ENCODE measurements at regions of chr1 and their contacts with region 1.

Region 1: GRCh38 chr1:206106328-206107167 is 10.6 kb downstream of the AVPR1B start:
- DNase-seq: peak; percentile 53 to 75 (median 61)
- H3K4me3 ChIP-seq: no peak overlapping the region
- H3K4me3 Mint-ChIP-seq: no peak overlapping the region
- H3K27ac ChIP-seq: no peak overlapping the region
- H3K27ac Mint-ChIP-seq: no peak overlapping the region
- H3K4me1 ChIP-seq: no peaks in the 10 kb centered on the region
- H3K4me1 Mint-ChIP-seq: peaks cover 0 to 1% (median 0%) of the 10 kb centered on the region in 3 donors
- H3K27me3 ChIP-seq: no peaks in the 10 kb centered on the region
- H3K27me3 Mint-ChIP-seq: peaks cover 3 to 9% of the 10 kb centered on the region in 2 donors

Region 2: GRCh38 chr1:206030714-206031113 is 75.8 kb before region 1 on chr1:
- CTCF ChIA-PET with region 1: interaction called, 11 read pairs
- POLR2A ChIA-PET with region 1: no interaction called
- DNase-seq: peak; percentile 30 to 62 (median 38)
- H3K4me3 ChIP-seq: no peak overlapping the region
- H3K4me3 Mint-ChIP-seq: no peak overlapping the region
- H3K27ac ChIP-seq: no peak overlapping the region
- H3K27ac Mint-ChIP-seq: no peak overlapping the region
- H3K4me1 ChIP-seq: no peaks in the 10 kb centered on the region
- H3K4me1 Mint-ChIP-seq: peaks cover 3 to 7% (median 5%) of the 10 kb centered on the region in 3 donors
- H3K27me3 ChIP-seq: no peaks in the 10 kb centered on the region
- H3K27me3 Mint-ChIP-seq: peaks cover 8 to 46% of the 10 kb centered on the region in 2 donors

Region 3: DNA sequence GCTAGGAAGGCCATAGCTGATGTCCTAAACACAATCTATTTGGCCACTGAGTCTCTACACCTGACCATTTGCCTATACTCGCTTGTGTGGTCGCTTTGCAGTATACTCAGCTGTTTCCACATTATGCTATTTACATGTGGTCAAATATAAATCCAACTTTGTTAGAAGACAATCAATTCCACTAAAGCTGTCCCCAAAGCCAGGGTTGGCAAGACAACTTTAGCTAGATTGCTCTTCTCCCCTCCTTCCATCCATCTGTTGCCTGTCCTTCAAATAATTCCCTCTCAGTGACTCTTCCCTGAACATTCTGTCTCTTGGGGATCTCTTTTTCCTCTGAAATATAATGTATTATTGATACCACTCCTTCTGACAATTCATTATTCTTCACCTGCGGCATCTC is 19.5 kb before region 1 on chr1:
- CTCF ChIA-PET with region 1: no interaction called
- POLR2A ChIA-PET with region 1: no interaction called
- DNase-seq: no peak
- H3K4me3 ChIP-seq: no peak overlapping the region
- H3K4me3 Mint-ChIP-seq: no peak overlapping the region
- H3K27ac ChIP-seq: no peak overlapping the region
- H3K27ac Mint-ChIP-seq: no peak overlapping the region
- H3K4me1 ChIP-seq: no peaks in the 10 kb centered on the region
- H3K4me1 Mint-ChIP-seq: no peaks in the 10 kb centered on the region
- H3K27me3 ChIP-seq: no peaks in the 10 kb centered on the region
- H3K27me3 Mint-ChIP-seq: peaks cover 0 to 3% of the 10 kb centered on the region in 2 donors

Measured in CD8-positive, alpha-beta memory T cell (primary cell).